Gastrocnemius medialis (tissue), 4 donors: ENCODE measurements at regions of chr10 and their contacts with region 1.

Region 1: GRCh38 chr10:67779465-67780203 is 58.4 kb downstream of the DNAJC12 start:
- DNase-seq: peak; percentile 36 to 46
- ATAC-seq: peak; percentile 82 to 90
- H3K4me3 ChIP-seq: no peak overlapping the region
- H3K27ac ChIP-seq: no peak overlapping the region
- H3K4me1 ChIP-seq: peaks cover 0 to 5% of the 10 kb centered on the region in 2 donors
- H3K27me3 ChIP-seq: no peaks in the 10 kb centered on the region
- CTCF ChIP-seq: peak; percentile 78 to 91 (median 87)
- POLR2A ChIP-seq: no peak

Region 2: GRCh38 chr10:67520924-67521520 is 258.6 kb before region 1 on chr10:
- in situ Hi-C with region 1: no loop called
- intact Hi-C with region 1: loop called (anchors 2 kb)
- DNase-seq: no peak
- ATAC-seq: peak; percentile 76 to 84
- H3K4me3 ChIP-seq: no peak overlapping the region
- H3K27ac ChIP-seq: no peak overlapping the region
- H3K4me1 ChIP-seq: peaks cover 0 to 6% of the 10 kb centered on the region in 2 donors
- H3K27me3 ChIP-seq: no peaks in the 10 kb centered on the region
- CTCF ChIP-seq: peak; percentile 44 to 75 (median 60)
- POLR2A ChIP-seq: no peak

Region 3: DNA sequence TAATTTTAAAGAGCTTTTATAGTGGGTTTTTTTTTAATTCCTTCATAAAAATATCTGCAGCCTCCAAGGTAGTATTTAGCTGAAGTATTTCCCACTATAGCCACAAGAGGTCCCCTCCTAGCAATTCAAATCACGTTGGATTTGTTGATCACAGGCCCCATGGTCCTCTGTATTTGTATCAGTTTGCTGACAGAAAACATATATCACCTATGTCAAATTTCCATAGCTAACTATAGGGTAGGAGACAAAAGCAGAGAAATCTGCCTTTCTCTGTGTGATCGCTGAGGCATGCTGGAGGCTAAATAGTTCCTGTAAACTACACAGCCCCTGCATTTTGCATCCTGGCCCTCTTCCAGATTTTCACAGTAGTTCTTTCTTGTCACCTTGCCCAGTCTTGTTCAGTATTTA is 81.9 kb before region 1 on chr10:
- in situ Hi-C with region 1: loop called (anchors 5 to 10 kb)
- intact Hi-C with region 1: loop called (anchors 1 kb)
- DNase-seq: no peak
- ATAC-seq: peak; percentile 65 to 71
- H3K4me3 ChIP-seq: no peak overlapping the region
- H3K27ac ChIP-seq: no peak overlapping the region
- H3K4me1 ChIP-seq: peaks cover 14 to 17% of the 10 kb centered on the region in 2 donors
- H3K27me3 ChIP-seq: no peaks in the 10 kb centered on the region
- CTCF ChIP-seq: peak; percentile 40 to 72 (median 55)
- POLR2A ChIP-seq: no peak